Activated CD4-positive, alpha-beta T cell treated with anti-CD3 and anti-CD28 coated beads for 36 hours (primary cell): ENCODE measurements at regions of chr20 and their contacts with region 1.

Region 1: DNA sequence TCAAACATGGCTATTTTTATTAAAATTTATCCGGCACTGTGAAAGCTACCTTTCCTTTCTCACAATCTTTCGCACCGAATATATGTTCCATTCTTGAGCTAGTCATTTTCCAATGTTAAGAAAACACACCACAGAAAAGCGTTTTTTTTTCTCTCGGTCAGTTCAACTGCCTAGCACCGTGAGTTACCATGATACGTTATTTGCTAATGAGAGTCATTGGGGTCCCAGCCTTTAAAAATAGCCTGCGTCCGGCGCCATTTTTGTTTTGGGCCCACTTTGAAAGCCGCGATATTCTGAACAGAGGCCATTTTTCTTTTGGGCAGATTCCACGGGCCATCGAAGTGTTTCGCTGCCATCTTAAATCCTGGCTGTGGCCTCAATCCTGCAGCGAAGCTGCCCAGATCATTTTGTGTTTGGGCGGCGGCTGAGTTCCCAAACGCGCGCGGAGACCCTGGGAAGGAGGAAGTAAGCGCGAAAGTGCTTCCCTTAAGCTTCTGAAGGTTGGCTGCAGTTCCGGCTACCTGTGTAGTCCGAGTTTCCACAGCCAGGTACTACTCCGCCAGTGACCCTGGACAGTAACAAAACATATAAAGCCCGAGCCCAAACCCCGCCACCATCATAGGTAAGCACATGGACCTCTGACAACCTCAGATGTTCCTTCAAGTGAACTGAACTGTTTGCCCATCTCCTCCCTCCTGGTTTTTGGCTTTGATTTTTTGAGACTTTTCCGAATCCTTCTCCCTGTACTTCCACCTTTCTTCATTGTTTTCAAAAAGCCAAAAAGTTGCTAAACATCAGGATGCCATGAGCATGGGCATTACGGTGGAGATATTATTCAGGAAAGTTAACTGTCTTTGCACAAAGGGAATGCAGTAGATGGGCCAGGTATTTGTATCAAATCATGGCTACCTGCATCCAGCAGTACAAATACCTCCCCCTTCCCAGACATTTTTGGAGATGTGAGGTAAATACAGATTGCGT is at the start of gene SLX4IP:
- DNase-seq: peak; percentile 88
- ATAC-seq: peak; percentile 68
- H3K4me3 Mint-ChIP-seq: peak within 1 kb of the TSS; percentile 78
- H3K27ac Mint-ChIP-seq: peak within 1 kb of the TSS; percentile 87
- H3K4me1 Mint-ChIP-seq: peaks cover 39% of the 10 kb centered on the region
- H3K27me3 Mint-ChIP-seq: no peaks in the 10 kb centered on the region
- total RNA-seq, gene SLX4IP: 7.4 to 7.8 TPM

Region 2: GRCh38 chr20:10219452-10219791 is 215.7 kb before region 1 on chr20:
- CTCF ChIA-PET with region 1: no interaction called
- POLR2A ChIA-PET with region 1: no interaction called
- intact Hi-C with region 1: loop called (anchors 1 to 5 kb)
- DNase-seq: peak; percentile 85
- ATAC-seq: no peak
- H3K4me3 Mint-ChIP-seq: no peak overlapping the region
- H3K27ac Mint-ChIP-seq: no peak overlapping the region
- H3K4me1 Mint-ChIP-seq: peaks cover 14% of the 10 kb centered on the region
- H3K27me3 Mint-ChIP-seq: peaks cover 46% of the 10 kb centered on the region

Region 3: DNA sequence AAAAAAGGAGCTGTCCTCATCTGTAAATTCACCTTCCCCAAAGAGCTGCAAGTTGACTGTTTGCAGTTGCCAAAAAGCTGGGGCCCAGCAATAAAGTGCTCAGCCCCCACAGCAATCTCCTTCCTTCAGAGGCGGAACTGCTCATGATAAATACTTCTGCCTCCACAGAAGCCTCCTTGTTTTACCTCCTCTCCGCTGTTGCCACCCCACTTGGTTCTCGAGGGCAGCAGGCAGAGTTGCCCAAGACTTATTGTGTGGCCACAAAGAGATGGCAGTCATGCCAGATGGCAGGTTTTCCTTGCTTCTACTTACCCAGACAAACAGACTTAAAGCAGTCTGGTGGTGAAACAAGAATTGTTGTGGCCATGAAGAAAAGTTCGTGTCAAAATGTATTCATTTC is 66.3 kb after region 1 on chr20:
- CTCF ChIA-PET with region 1: interaction called, 3 read pairs
- POLR2A ChIA-PET with region 1: no interaction called
- intact Hi-C with region 1: loop called (anchors 5 kb)
- DNase-seq: peak; percentile 35
- ATAC-seq: peak; percentile 52
- H3K4me3 Mint-ChIP-seq: peak overlapping the region; percentile 63
- H3K27ac Mint-ChIP-seq: peak overlapping the region; percentile 43
- H3K4me1 Mint-ChIP-seq: peaks cover 28% of the 10 kb centered on the region
- H3K27me3 Mint-ChIP-seq: no peaks in the 10 kb centered on the region

Region 4: DNA sequence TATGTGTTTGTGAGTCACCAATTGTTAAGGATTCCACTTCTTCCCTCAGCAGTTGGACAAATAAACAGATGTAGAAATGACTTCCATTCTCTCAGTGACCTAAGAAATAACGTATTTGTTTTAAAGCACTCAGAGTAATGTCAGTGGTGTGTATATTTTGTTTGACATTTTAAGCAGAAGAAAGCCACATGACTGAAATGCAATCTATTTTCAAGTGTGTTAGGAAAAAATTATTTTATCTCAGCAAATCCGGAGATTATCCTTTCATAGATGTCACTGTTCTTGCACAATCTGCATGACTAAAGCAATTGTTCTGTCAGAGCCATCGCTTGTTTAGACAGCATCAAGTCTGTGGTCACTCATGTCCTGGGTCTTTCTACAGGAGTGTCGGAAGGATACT is 161.6 kb after region 1 on chr20:
- CTCF ChIA-PET with region 1: no interaction called
- POLR2A ChIA-PET with region 1: no interaction called
- intact Hi-C with region 1: loop called (anchors 2 to 5 kb)
- DNase-seq: no peak
- ATAC-seq: no peak
- H3K4me3 Mint-ChIP-seq: no peak overlapping the region
- H3K27ac Mint-ChIP-seq: no peak overlapping the region
- H3K4me1 Mint-ChIP-seq: peaks cover 17% of the 10 kb centered on the region
- H3K27me3 Mint-ChIP-seq: no peaks in the 10 kb centered on the region